Right cardiac atrium (tissue), 5 donors: ENCODE measurements at regions of chr20 and their contacts with region 1.

Region 1: GRCh38 chr20:40945754-40946450 is 82.7 kb upstream of the TOP1 start:
- DNase-seq: peak; percentile 57 to 78 (median 72)
- ATAC-seq: peak; percentile 90
- H3K4me3 ChIP-seq: no peak overlapping the region
- H3K27ac ChIP-seq: no peak overlapping the region
- H3K4me1 ChIP-seq: no peaks in the 10 kb centered on the region
- H3K27me3 ChIP-seq: no peaks in the 10 kb centered on the region

Region 2: DNA sequence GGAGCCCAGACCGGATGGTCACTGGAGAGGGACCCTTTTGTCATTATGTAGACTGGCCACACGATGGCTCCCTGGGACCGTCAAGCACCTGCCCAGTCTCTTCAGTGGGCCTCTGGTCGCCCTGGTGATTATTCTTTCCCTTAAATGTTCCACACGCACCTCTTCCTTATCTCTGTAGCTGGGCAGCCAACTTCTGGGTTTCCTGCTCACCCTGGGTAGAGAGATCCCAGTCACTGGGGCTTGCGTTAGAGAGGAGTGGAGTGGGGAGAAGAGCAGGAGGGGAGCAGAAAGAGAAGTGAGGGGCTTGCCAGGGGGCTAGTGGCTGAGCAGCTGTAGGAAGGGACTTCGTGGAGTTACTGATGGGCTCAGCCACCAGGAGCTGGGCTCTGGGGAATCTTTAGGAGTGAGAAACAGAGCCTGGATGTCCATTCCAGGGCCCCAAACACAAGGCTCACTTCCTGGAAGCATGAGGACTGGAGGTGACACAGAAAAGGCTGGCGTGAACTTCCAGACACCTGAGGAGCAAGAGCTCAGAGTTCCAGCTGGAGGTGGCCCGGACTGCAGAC is 1833.6 kb before region 1 on chr20:
- intact Hi-C with region 1: loop called in 1 of 4 experiments (anchors 5 kb)
- DNase-seq: peak; percentile 49 to 67 (median 61)
- ATAC-seq: peak; percentile 90 to 93
- H3K4me3 ChIP-seq: no peak overlapping the region
- H3K27ac ChIP-seq: no peak overlapping the region
- H3K4me1 ChIP-seq: no peaks in the 10 kb centered on the region
- H3K27me3 ChIP-seq: no peaks in the 10 kb centered on the region

Region 3: GRCh38 chr20:40741507-40742106 is 204.3 kb before region 1 on chr20:
- intact Hi-C with region 1: loop called in 2 of 4 experiments (anchors 10 kb)
- DNase-seq: peak in 2 of 3 donors; percentile 50 to 54
- ATAC-seq: peak in 1 of 2 donors; percentile 34
- H3K4me3 ChIP-seq: no peak overlapping the region
- H3K27ac ChIP-seq: no peak overlapping the region
- H3K4me1 ChIP-seq: no peaks in the 10 kb centered on the region
- H3K27me3 ChIP-seq: peaks cover 1% of the 10 kb centered on the region

Region 4: GRCh38 chr20:40770564-40771307 is 175.2 kb before region 1 on chr20:
- intact Hi-C with region 1: no loop called
- DNase-seq: peak; percentile 49 to 70 (median 65)
- ATAC-seq: peak; percentile 67 to 77
- H3K4me3 ChIP-seq: no peak overlapping the region
- H3K27ac ChIP-seq: no peak overlapping the region
- H3K4me1 ChIP-seq: no peaks in the 10 kb centered on the region
- H3K27me3 ChIP-seq: no peaks in the 10 kb centered on the region

Region 5: GRCh38 chr20:40980106-40980827 is 34.4 kb after region 1 on chr20:
- intact Hi-C with region 1: no loop called
- DNase-seq: no peak
- ATAC-seq: no peak
- H3K4me3 ChIP-seq: no peak overlapping the region
- H3K27ac ChIP-seq: no peak overlapping the region
- H3K4me1 ChIP-seq: no peaks in the 10 kb centered on the region
- H3K27me3 ChIP-seq: no peaks in the 10 kb centered on the region

Region 6: GRCh38 chr20:40993794-40994548 is 48.1 kb after region 1 on chr20:
- intact Hi-C with region 1: no loop called
- DNase-seq: no peak
- ATAC-seq: no peak
- H3K4me3 ChIP-seq: no peak overlapping the region
- H3K27ac ChIP-seq: no peak overlapping the region
- H3K4me1 ChIP-seq: no peaks in the 10 kb centered on the region
- H3K27me3 ChIP-seq: no peaks in the 10 kb centered on the region